ENCODE measurements at regions of chr9 and their contacts with region 1.

Region 1: GRCh38 chr9:38227061-38227540 is 158.1 kb upstream of the SHB start:
- DNase-seq: peak; percentile 92 to 96
- H3K4me3 ChIP-seq: peak overlapping the region; percentile 24; the same call in 1 of the 2 replicates
- H3K27ac ChIP-seq: peak overlapping the region; percentile 90
- H3K4me1 ChIP-seq: peaks cover 30% of the 10 kb centered on the region
- H3K27me3 ChIP-seq: no peaks in the 10 kb centered on the region
- CTCF ChIP-seq: no peak

Region 2: DNA sequence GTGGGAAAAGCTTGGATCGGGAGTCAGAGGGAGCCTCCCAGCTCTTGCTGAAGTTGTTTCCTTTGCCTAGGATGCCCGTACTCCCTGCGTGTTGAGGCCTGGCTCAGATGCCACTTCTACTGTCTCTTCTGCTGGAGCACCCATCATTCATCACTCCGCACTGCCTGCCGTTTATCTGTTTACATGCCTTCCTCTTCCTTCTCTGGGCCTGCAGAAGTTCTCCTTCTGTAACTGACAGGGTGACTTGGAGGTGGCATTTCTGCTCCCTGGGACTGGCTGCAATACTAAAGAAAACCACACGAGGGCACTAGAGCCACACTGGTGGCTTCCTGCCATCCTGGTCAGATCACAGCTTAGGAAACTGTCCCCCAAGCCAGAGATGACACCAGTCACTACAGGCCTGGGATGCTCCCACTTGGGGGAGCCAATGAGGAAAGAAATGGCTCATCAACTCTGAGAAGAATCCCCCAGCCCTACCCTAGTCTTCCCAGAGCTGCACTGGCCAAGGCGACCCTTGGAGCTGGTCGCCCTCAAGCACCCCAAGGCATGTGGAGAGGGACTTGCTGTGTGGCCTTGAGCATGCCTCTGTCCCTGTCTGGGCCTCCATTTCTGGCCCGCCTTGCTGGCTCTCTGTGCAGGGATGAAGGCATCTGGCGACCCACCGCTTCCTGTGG is 313.5 kb before region 1 on chr9:
- CTCF ChIA-PET with region 1: no interaction called
- POLR2A ChIA-PET with region 1: no interaction called
- intact Hi-C with region 1: loop called (anchors 1 kb)
- DNase-seq: peak; percentile 50 to 77
- H3K4me3 ChIP-seq: no peak overlapping the region
- H3K27ac ChIP-seq: no peak overlapping the region
- H3K4me1 ChIP-seq: peaks cover 13% of the 10 kb centered on the region
- H3K27me3 ChIP-seq: no peaks in the 10 kb centered on the region
- CTCF ChIP-seq: peak; percentile 90

Region 3: GRCh38 chr9:38008168-38009034 is 218.7 kb before region 1 on chr9:
- CTCF ChIA-PET with region 1: no interaction called
- POLR2A ChIA-PET with region 1: no interaction called
- intact Hi-C with region 1: loop called (anchors 2 kb)
- DNase-seq: peak; percentile 74 to 96
- H3K4me3 ChIP-seq: no peak overlapping the region
- H3K27ac ChIP-seq: peak overlapping the region; percentile 69
- H3K4me1 ChIP-seq: peaks cover 45% of the 10 kb centered on the region
- H3K27me3 ChIP-seq: no peaks in the 10 kb centered on the region
- CTCF ChIP-seq: no peak

Region 4: GRCh38 chr9:38039090-38039906 is 187.8 kb before region 1 on chr9:
- CTCF ChIA-PET with region 1: no interaction called
- POLR2A ChIA-PET with region 1: no interaction called
- intact Hi-C with region 1: loop called (anchors 1 kb)
- DNase-seq: peak; percentile 61 to 86
- H3K4me3 ChIP-seq: no peak overlapping the region
- H3K27ac ChIP-seq: peak overlapping the region; percentile 93
- H3K4me1 ChIP-seq: peaks cover 97% of the 10 kb centered on the region
- H3K27me3 ChIP-seq: no peaks in the 10 kb centered on the region
- CTCF ChIP-seq: no peak

Region 5: DNA sequence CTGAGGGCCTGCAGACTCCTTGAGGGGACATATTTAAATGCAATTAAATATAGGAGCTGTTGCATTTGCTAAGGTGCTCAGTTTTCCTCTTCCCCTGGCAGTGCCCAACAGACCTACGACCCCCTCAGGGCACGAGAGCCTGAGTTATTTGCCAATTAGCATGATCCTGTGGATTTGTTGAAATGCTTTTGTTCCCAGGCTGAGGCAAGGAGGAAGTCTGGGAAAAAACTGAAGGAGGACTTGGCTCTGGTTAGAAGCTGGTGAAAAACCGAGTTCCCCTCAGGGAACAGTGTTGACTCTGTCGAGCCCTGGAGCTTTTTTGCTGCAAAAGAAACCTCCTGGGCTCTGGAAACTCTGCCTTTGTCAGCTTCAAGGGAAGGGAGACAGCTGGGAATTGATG is 54.5 kb before region 1 on chr9:
- CTCF ChIA-PET with region 1: no interaction called
- POLR2A ChIA-PET with region 1: interaction called, 7 read pairs
- intact Hi-C with region 1: loop called (anchors 2 kb)
- DNase-seq: no peak
- H3K4me3 ChIP-seq: no peak overlapping the region
- H3K27ac ChIP-seq: peak overlapping the region; percentile 100
- H3K4me1 ChIP-seq: peaks cover 21% of the 10 kb centered on the region
- H3K27me3 ChIP-seq: no peaks in the 10 kb centered on the region
- CTCF ChIP-seq: no peak

Region 6: GRCh38 chr9:38178237-38178636 is 48.9 kb before region 1 on chr9:
- CTCF ChIA-PET with region 1: no interaction called
- POLR2A ChIA-PET with region 1: no interaction called
- intact Hi-C with region 1: loop called (anchors 2 kb)
- DNase-seq: peak in 1 of 2 experiments; percentile 74
- H3K4me3 ChIP-seq: no peak overlapping the region
- H3K27ac ChIP-seq: peak overlapping the region; percentile 65
- H3K4me1 ChIP-seq: peaks cover 27% of the 10 kb centered on the region
- H3K27me3 ChIP-seq: no peaks in the 10 kb centered on the region
- CTCF ChIP-seq: no peak

Region 7: DNA sequence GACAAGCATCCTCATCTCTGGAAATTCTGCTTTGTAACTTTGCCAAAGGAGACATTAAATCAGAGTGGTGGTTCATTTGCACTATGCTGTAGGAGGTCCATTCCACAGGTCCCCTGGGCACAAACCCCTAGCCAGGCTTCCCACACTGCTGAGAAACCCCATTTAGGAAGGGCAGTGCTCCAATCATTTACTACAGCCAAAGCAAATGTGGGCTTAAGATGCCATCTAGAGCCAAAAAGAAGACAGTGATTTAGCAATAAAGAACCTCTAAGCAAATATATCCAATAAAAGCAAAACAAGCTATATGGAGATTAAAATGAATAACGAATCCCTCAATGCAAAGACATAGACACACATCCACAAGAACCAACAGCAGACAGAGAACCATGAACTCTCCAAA is 36.4 kb after region 1 on chr9:
- CTCF ChIA-PET with region 1: no interaction called
- POLR2A ChIA-PET with region 1: no interaction called
- intact Hi-C with region 1: loop called (anchors 2 kb)
- DNase-seq: peak in 1 of 2 experiments; percentile 37
- H3K4me3 ChIP-seq: no peak overlapping the region
- H3K27ac ChIP-seq: no peak overlapping the region
- H3K4me1 ChIP-seq: no peaks in the 10 kb centered on the region; the same call in 1 of the 2 replicates
- H3K27me3 ChIP-seq: no peaks in the 10 kb centered on the region
- CTCF ChIP-seq: peak; percentile 59

Region 8: DNA sequence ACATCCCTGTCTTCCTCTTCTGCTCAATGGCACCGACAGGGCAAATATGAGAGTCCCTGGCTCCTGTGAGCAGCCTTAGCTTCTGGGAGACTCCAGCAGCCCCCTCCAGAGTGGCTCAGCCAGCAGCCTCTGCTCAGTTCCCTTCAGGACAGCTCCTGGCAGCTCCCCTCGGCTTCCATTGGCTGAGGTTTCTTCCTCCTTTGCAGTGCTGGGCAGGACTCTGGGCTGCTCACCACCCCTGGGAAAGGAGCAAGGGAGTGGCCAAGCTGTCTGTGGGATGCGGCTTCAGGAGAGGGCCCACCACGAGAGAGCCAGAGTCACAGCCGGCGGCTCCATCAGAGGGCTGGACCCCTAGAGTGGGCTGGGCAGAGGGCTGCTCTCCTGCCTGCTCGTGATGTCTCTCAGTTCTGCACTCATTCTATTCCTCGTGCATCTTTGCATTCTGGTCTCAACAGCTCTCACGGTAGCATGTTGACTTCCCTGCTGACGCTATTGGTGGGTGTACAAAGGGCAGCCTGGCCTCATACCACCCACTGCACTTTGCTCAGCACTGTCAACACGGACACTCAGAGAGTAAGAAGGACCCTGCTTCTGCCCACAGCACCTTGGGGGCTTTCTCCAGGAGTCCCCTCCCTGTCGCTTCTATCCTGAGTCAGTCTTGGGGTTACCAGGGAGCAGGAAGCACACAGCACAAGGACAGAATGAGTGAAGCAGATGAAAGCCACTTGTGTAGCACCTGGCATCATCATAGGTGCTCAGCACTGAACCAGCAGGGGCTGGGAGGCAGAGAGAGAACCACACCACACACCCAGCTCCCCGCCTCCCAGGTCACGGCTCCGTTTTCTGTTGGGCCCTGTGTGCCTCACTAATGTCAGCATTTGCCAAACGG is 84.5 kb after region 1 on chr9:
- CTCF ChIA-PET with region 1: no interaction called
- POLR2A ChIA-PET with region 1: no interaction called
- intact Hi-C with region 1: no loop called
- DNase-seq: no peak
- H3K4me3 ChIP-seq: no peak overlapping the region
- H3K27ac ChIP-seq: no peak overlapping the region
- H3K4me1 ChIP-seq: no peaks in the 10 kb centered on the region
- H3K27me3 ChIP-seq: no peaks in the 10 kb centered on the region
- CTCF ChIP-seq: no peak

Measured in PC-9 (cell line).